GM13976 (cell line): ENCODE measurements at regions of chr16 and their contacts with region 1.

Region 1: DNA sequence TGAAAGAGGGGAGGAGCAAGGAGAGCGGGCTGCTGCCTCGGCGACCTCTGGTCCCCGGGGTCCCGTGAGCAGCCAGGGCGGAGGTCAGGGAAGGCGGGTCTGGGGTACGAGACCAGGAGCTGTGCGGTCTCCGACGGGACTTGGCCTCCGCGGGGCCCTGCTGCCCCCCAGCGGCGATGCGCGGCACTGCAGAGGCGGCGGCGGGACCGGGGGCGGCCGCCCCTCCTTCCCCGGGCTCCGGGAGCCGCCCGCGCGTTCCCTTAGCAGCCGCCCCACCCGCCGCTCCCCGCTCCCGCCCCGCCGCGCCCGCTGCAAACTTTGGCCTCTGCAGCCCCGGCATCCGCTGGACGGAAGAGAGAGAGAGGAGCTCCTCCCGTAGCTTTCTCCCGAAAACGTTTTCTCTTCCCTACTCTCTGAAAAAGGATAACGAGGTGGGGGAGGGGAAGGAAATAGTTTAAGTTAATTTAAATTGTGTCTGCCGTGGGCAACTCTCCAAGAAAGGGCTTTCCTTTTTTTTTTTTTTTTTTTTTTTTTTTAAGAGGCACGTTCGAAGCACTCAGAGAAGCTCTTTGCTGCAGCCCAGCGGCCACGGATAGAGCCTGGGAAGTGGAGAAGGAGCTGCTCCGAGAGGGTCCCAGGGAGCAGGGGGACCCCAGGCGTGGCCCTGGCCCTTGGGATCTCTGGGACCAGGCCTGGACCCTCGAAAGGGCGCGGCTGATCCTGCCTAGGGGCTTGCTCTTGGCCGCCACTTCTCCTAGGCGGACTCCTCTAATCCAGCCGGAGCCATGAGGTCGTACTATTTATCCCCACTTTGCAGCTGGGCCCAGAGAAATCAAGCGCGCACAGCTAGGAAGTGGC is 43.2 kb downstream of the C16orf82 start:
- DNase-seq: peak; percentile 92
- CTCF ChIP-seq: peak; percentile 96

Region 2: GRCh38 chr16:25838724-25839186 is 1271.1 kb before region 1 on chr16:
- in situ Hi-C with region 1: loop called (anchors 25 kb)
- DNase-seq: peak; percentile 22
- CTCF ChIP-seq: peak; percentile 68